ENCODE measurements at regions of chr7 and their contacts with region 1.

Region 1: GRCh38 chr7:34823640-34824258 is 165.7 kb downstream of the NPSR1 start:
- DNase-seq: no peak
- H3K4me3 ChIP-seq: no peak overlapping the region
- H3K27ac ChIP-seq: no peak overlapping the region
- H3K4me1 ChIP-seq: no peaks in the 10 kb centered on the region
- H3K27me3 ChIP-seq: no peaks in the 10 kb centered on the region
- CTCF ChIP-seq: peak; percentile 44 to 84 (median 67)
- POLR2A ChIP-seq: no peak

Region 2: DNA sequence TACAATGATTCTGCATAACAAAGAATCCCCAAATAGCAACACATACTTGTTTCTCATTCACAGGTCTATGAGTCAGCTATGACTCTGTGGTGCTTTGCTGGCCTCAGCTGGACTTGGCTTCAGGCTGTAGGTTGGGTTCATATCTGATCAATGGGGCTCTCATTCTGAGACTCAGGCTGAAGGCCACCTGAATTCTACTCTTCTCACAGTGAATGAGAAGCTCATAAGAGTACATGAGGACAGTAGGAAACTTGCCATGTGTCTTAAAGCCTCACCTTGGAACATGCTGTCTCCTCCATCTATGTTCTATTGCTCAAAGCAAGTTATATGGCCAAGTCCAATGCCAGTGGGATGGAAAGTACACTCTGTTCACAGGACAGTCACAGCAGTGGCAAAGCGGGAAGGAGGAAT is 625.5 kb before region 1 on chr7:
- intact Hi-C with region 1: no loop called
- DNase-seq: no peak
- H3K4me3 ChIP-seq: no peak overlapping the region
- H3K27ac ChIP-seq: no peak overlapping the region
- H3K4me1 ChIP-seq: no peaks in the 10 kb centered on the region
- H3K27me3 ChIP-seq: no peaks in the 10 kb centered on the region
- CTCF ChIP-seq: no peak
- POLR2A ChIP-seq: no peak

Region 3: DNA sequence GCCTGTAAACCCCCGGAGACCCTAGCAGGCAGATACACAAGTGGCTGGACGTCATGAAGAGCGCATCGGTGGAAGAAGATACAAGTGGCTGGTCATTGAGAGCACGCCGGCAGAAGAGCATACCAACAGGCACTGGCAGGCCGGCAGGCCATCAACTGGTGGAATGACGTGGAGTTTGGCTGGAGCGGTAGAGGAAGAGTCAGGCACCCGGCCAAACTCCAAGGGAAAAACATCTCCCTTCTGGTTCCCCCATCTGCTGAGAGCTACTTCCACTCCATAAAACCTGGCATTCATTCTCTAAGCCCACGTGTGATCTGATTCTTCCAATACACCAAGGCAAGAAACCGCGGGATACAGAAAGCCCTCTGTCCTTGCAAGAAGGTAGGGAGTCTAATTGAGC is 279.1 kb before region 1 on chr7:
- intact Hi-C with region 1: no loop called
- DNase-seq: no peak
- H3K4me3 ChIP-seq: no peak overlapping the region
- H3K27ac ChIP-seq: no peak overlapping the region
- H3K4me1 ChIP-seq: no peaks in the 10 kb centered on the region
- H3K27me3 ChIP-seq: no peaks in the 10 kb centered on the region
- CTCF ChIP-seq: no peak
- POLR2A ChIP-seq: no peak

Region 4: DNA sequence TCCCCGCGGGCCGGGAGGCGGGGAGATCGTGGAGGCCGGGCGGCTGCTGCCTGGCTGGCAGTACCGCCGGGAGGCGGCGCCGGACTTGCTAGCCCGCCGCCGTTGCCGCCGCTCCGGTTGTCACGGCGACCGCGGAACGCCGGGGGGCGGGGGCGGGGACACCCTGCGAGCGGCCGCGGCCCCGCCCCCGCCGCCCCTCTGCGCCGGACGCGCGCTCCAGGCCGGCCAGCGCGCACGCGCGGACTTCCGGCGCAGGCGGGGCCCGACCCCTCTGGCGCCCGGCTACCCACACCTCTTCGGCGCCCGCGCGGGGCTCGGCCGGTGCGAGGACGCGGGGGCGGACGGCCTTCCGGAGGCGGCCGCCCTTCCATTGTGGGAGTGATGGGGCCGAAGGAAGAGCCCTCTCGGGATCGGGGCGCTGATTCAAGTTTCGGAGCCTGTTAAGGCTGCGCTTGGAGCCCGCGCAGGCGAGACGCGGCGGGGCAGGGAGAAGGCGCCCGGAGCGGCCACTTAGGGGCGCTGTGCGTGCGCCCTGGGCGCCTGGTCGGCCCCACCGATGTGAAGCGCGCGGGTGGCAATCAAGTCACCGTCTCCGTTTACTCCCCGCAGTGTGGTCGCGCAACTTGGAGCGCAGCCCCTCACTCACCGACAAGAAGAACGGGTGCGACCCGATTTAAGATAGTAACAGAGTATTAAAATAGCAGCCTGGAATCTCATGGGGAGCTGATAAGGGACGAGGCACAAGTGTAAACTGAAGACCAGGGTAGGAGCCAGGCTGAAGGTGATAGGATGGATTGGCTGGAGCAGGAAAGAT is 214.0 kb after region 1 on chr7:
- intact Hi-C with region 1: loop called (anchors 10 kb)
- DNase-seq: peak; percentile 99
- H3K4me3 ChIP-seq: peak overlapping the region; percentile 64 to 97 (median 84)
- H3K27ac ChIP-seq: peak overlapping the region; percentile 75 to 91 (median 87)
- H3K4me1 ChIP-seq: peaks cover 14 to 47% (median 27%) of the 10 kb centered on the region in 6 donors
- H3K27me3 ChIP-seq: no peaks in the 10 kb centered on the region
- CTCF ChIP-seq: peak; percentile 48 to 94 (median 88)
- POLR2A ChIP-seq: no peak